Dendritic cell treated with granulocyte-macrophage colony-stimulating factor and Interleukin-4, amounts not matched to agents 40 ng/mL and 50 ng/mL, for 4 days (primary cell): ENCODE measurements at regions of chr6 and their contacts with region 1.

Region 1: GRCh38 chr6:108222504-108222903 is 38.3 kb downstream of the SNX3 start:
- H3K4me3 Mint-ChIP-seq: no peak overlapping the region
- H3K27ac Mint-ChIP-seq: peak overlapping the region; percentile 60
- H3K4me1 Mint-ChIP-seq: peaks cover 25% of the 10 kb centered on the region
- H3K27me3 Mint-ChIP-seq: no peaks in the 10 kb centered on the region

Region 2: DNA sequence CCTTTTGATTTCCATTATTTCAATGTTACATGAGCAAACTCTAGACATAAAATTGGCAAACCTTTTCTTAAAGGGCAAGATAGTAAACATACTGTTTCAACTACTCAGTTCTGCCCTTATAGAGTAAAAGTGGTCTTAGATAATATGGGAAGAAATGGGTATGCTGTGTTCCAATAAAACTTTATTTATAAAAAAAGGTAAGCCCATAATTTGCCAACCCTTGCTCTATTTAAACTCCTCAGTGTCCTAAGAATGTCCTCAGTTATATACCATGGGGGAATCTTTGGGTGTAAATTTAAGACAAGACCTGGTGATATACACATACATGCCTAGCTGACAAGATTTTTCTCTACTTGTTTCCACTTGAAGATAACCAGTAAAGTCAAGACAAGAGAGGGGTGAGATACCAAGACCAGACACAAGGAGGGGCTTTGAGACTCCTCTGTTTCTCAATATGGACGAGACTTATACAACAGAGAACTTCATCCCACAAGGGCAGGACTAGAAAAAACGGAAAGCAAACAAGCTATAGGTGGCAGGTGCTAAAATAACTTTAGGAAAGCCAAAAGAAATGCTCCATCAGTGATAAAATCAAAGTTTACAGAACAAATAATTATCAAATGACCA is 27.8 kb after region 1 on chr6:
- intact Hi-C with region 1: loop called (anchors 5 kb)
- H3K4me3 Mint-ChIP-seq: no peak overlapping the region
- H3K27ac Mint-ChIP-seq: no peak overlapping the region
- H3K4me1 Mint-ChIP-seq: peaks cover 58% of the 10 kb centered on the region
- H3K27me3 Mint-ChIP-seq: no peaks in the 10 kb centered on the region

Region 3: GRCh38 chr6:108423982-108424705 is 201.6 kb after region 1 on chr6:
- intact Hi-C with region 1: no loop called
- H3K4me3 Mint-ChIP-seq: no peak overlapping the region
- H3K27ac Mint-ChIP-seq: no peak overlapping the region
- H3K4me1 Mint-ChIP-seq: no peaks in the 10 kb centered on the region
- H3K27me3 Mint-ChIP-seq: no peaks in the 10 kb centered on the region

Region 4: DNA sequence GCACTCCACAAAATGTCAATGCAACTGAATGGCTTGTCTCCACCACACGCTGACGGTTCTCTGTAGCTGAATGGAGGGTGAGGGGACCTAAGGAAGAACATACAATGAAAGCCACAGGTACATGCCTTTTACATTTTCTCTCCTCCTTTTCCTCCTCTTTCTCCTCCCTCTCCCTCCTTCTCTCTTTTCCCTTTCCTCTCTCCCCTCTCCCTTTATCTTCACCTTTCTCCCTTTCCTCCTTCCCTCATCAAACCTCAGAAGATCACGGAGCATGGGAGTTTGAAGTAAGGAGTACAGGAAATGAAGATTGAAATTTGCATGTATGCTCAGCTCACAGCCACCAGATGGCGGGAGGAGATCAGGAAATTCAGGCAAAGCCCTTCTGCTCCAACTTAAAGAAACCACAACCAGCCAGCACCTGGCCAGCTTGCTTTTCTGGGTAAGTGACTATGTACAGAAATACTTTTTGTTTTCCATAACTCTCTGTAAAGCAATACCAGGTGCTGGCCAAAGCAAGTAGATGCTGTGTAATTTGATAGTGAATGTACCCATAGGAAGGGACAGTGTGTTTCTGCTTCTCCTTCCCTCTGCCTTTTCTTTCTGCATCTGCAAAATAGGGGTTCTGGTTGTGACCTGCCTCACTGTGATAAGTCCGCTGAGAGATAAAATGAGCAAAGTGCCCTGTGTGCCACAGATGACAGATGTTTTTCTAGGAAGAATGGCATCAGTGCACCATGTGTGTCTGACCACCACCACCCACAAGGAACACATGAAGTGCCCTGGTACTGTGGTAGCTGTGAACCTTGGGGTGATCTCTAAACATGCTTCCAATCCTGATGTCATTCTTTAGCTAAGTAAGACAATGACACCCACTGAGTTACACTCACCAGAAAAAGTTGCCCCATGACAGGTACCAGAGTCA is 319.6 kb after region 1 on chr6:
- intact Hi-C with region 1: no loop called
- H3K4me3 Mint-ChIP-seq: no peak overlapping the region
- H3K27ac Mint-ChIP-seq: no peak overlapping the region
- H3K4me1 Mint-ChIP-seq: peaks cover 26% of the 10 kb centered on the region
- H3K27me3 Mint-ChIP-seq: peaks cover 13% of the 10 kb centered on the region